Activated CD4-positive, alpha-beta T cell treated with anti-CD3 and anti-CD28 coated beads for 36 hours (primary cell): ENCODE measurements at regions of chr2 and their contacts with region 1.

Region 1: DNA sequence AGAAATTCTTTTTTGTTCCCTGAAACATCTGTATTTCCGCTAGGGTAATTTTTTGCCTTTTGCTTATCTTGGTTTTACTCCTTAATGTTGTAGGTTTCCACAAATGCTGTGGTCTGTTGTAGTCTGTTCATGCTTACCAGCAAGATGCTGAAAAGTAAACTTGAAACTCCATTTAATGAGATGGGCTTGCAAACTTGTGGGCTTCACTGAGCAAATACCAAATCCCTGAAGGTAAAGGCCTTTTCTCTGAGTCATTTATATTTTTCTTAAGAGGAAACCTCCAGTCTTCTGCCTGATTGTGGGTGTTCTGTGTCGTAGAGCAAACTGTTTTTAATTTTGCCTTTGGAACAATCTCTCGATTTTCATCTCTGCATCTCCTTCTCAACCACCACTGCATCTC is 9.3 kb downstream of the SP140 start:
- DNase-seq: no peak
- ATAC-seq: peak; percentile 85
- H3K4me3 Mint-ChIP-seq: no peak overlapping the region
- H3K27ac Mint-ChIP-seq: peak overlapping the region; percentile 86
- H3K4me1 Mint-ChIP-seq: peaks cover 47% of the 10 kb centered on the region
- H3K27me3 Mint-ChIP-seq: no peaks in the 10 kb centered on the region

Region 2: DNA sequence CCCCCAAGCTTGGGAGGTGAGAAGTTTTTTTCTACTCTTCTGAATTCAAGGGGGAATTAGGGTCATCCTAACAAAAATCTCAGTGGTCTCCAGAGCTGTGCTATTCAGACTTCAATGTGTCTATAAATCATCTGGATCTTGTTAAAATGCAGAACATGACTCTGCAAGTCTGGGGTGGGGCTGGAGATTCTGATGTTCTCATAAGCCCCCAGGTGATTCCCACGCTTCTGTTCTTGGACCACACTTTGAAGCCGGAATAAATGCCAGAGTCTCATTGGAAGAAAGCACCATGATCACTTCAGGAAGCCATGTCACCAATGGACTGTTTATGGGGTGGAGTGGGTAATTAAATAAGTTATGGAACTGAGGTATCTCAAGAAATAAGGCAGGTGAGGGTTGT is 143.9 kb before region 1 on chr2:
- CTCF ChIA-PET with region 1: no interaction called
- POLR2A ChIA-PET with region 1: no interaction called
- intact Hi-C with region 1: no loop called
- DNase-seq: no peak
- ATAC-seq: no peak
- H3K4me3 Mint-ChIP-seq: no peak overlapping the region
- H3K27ac Mint-ChIP-seq: no peak overlapping the region
- H3K4me1 Mint-ChIP-seq: no peaks in the 10 kb centered on the region
- H3K27me3 Mint-ChIP-seq: peaks cover 13% of the 10 kb centered on the region

Region 3: DNA sequence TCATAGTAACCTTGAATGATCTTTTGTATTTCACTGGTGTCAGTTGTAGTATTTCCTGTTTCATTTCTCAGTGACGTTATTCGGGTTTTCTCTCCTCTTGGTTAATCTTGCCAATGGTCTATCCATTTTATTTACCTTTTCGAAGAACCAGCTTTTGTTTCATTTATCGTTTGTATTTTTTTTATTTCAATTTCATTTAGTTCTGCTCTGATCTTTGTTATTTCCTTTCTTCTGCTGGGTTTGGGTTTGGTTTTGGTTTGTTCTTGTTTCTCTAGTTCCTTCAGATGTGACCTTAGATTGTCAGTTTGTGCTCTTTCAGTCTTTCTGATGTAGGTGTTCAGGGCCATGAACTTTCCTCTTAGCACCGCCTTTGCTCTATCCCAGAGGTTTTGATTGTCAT is 27.4 kb after region 1 on chr2:
- CTCF ChIA-PET with region 1: no interaction called
- POLR2A ChIA-PET with region 1: no interaction called
- intact Hi-C with region 1: loop called (anchors 1 to 2 kb)
- DNase-seq: no peak
- ATAC-seq: peak; percentile 69
- H3K4me3 Mint-ChIP-seq: peak overlapping the region; percentile 37
- H3K27ac Mint-ChIP-seq: peak overlapping the region; percentile 81
- H3K4me1 Mint-ChIP-seq: peaks cover 61% of the 10 kb centered on the region
- H3K27me3 Mint-ChIP-seq: no peaks in the 10 kb centered on the region

Region 4: DNA sequence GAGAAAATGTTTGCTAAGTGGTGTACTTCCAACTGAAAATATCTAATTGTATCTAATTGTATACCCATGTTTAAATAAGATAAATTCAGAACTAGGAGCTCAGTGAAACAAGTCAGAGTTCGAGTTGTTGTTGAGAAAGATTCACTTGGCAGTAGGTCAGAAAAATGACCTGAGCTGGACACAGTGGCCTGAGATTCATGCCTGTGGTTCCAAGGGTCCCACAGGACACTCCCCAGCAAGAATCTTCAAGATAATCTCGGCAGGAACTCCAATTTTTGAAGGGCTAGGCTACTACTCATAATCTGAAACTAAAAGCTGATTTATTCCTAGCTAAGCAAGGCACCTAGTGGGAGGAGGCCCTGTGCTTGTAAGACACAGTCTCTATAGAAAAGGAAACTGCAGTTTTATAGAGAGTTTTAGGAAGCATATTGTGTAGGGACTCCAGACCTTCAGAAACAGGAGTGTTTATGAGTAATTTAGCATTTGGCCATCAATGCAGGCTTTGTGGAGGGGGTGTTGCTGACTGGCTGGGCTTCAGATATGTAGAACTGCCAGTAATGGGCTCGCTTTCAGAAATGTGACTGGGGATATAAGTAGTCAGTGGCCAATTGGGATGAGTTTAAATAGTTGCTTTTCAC is 33.9 kb after region 1 on chr2:
- CTCF ChIA-PET with region 1: no interaction called
- POLR2A ChIA-PET with region 1: no interaction called
- intact Hi-C with region 1: loop called (anchors 1 to 2 kb)
- DNase-seq: peak; percentile 41
- ATAC-seq: peak; percentile 75
- H3K4me3 Mint-ChIP-seq: peak overlapping the region; percentile 11
- H3K27ac Mint-ChIP-seq: peak overlapping the region; percentile 74
- H3K4me1 Mint-ChIP-seq: peaks cover 43% of the 10 kb centered on the region
- H3K27me3 Mint-ChIP-seq: no peaks in the 10 kb centered on the region